ENCODE measurements at regions of chr9 and their contacts with region 1.

Region 1: GRCh38 chr9:72871685-72872084 is 81.2 kb downstream of the ALDH1A1 start:
- DNase-seq: peak; percentile 62
- H3K4me3 ChIP-seq: no peak overlapping the region
- H3K27ac ChIP-seq: peak overlapping the region; percentile 50
- H3K4me1 ChIP-seq: peaks cover 5% of the 10 kb centered on the region
- H3K27me3 ChIP-seq: no peaks in the 10 kb centered on the region
- CTCF ChIP-seq: peak; percentile 20 to 29
- POLR2A ChIP-seq: no peak

Region 2: GRCh38 chr9:72827950-72828731 is 43.5 kb before region 1 on chr9:
- CTCF ChIA-PET with region 1: no interaction called
- POLR2A ChIA-PET with region 1: no interaction called
- dilution Hi-C with region 1: no loop called
- intact Hi-C with region 1: loop called (anchors 10 kb)
- DNase-seq: peak; percentile 42
- H3K4me3 ChIP-seq: no peak overlapping the region
- H3K27ac ChIP-seq: no peak overlapping the region
- H3K4me1 ChIP-seq: peaks cover 4% of the 10 kb centered on the region
- H3K27me3 ChIP-seq: no peaks in the 10 kb centered on the region
- CTCF ChIP-seq: no peak
- POLR2A ChIP-seq: no peak

Region 3: GRCh38 chr9:72882117-72882775 is 10.6 kb after region 1 on chr9:
- CTCF ChIA-PET with region 1: interaction called, 10 read pairs
- POLR2A ChIA-PET with region 1: no interaction called
- dilution Hi-C with region 1: no loop called
- intact Hi-C with region 1: no loop called
- DNase-seq: no peak
- H3K4me3 ChIP-seq: no peak overlapping the region
- H3K27ac ChIP-seq: no peak overlapping the region
- H3K4me1 ChIP-seq: no peaks in the 10 kb centered on the region
- H3K27me3 ChIP-seq: no peaks in the 10 kb centered on the region
- CTCF ChIP-seq: no peak
- POLR2A ChIP-seq: no peak

Region 4: GRCh38 chr9:73009649-73010288 is 138.1 kb after region 1 on chr9:
- CTCF ChIA-PET with region 1: interaction called, 20 read pairs
- POLR2A ChIA-PET with region 1: no interaction called
- dilution Hi-C with region 1: no loop called
- intact Hi-C with region 1: no loop called
- DNase-seq: no peak
- H3K4me3 ChIP-seq: no peak overlapping the region
- H3K27ac ChIP-seq: no peak overlapping the region
- H3K4me1 ChIP-seq: peaks cover 38% of the 10 kb centered on the region
- H3K27me3 ChIP-seq: no peaks in the 10 kb centered on the region
- CTCF ChIP-seq: no peak
- POLR2A ChIP-seq: no peak

Region 5: DNA sequence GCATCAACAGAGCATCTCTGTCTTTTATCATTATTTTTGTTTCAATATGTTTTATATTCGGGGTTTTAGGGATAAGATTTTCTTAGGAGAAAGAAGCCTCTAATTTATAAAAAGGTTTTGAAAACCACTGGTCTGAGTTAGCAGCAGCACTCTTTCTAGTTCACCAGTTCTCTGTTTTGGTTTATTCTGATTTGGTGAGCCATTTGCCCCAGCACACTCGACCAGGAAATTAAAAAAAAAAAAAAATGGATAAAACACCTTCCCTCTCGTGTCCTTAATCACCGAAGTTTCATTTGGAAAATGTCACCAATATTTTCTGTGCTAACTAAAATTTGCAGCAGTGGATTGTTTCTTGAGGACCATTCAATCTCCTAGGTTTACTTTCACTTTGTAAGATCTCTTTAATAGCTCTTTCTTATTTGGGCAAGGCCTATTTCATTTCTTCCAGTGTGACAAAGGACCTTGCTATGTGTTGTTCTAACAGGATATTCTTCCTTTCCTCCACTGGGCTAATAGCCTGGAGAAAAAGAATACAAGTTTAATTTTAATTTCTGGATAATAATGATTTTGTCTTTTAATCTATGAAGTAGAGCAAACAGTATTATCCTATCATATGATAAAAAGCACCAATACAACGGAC is 222.2 kb after region 1 on chr9:
- CTCF ChIA-PET with region 1: interaction called, 12 read pairs
- POLR2A ChIA-PET with region 1: no interaction called
- dilution Hi-C with region 1: loop called (anchors 25 kb)
- intact Hi-C with region 1: no loop called
- DNase-seq: peak; percentile 40
- H3K4me3 ChIP-seq: peak overlapping the region in 2 of 3 experiments; percentile 33 to 36
- H3K27ac ChIP-seq: peak overlapping the region; percentile 18
- H3K4me1 ChIP-seq: peaks cover 3% of the 10 kb centered on the region
- H3K27me3 ChIP-seq: no peaks in the 10 kb centered on the region
- CTCF ChIP-seq: no peak
- POLR2A ChIP-seq: no peak

Measured in endothelial cell of umbilical vein (primary cell).